A549 (cell line): ENCODE measurements at regions of chr12 and their contacts with region 1.

Region 1: GRCh38 chr12:68807576-68808387 is at the start of gene MDM2:
- DNase-seq: peak; percentile 96 to 97
- ATAC-seq: peak; percentile 87 to 91
- H3K4me3 ChIP-seq: peak within 1 kb of the TSS; percentile 88
- H3K27ac ChIP-seq: peak within 1 kb of the TSS; percentile 97
- H3K4me1 ChIP-seq: peaks cover 28% of the 10 kb centered on the region
- CTCF ChIP-seq: peak; percentile 67
- EP300 ChIP-seq: no peak
- POLR2A ChIP-seq: peak; percentile 66
- RAD21 ChIP-seq: peak; percentile 6 to 12; a peak in 1 of 5 replicates
- polyA plus RNA-seq, gene MDM2: 96.4 and 108 TPM in 2 replicates

Region 2: DNA sequence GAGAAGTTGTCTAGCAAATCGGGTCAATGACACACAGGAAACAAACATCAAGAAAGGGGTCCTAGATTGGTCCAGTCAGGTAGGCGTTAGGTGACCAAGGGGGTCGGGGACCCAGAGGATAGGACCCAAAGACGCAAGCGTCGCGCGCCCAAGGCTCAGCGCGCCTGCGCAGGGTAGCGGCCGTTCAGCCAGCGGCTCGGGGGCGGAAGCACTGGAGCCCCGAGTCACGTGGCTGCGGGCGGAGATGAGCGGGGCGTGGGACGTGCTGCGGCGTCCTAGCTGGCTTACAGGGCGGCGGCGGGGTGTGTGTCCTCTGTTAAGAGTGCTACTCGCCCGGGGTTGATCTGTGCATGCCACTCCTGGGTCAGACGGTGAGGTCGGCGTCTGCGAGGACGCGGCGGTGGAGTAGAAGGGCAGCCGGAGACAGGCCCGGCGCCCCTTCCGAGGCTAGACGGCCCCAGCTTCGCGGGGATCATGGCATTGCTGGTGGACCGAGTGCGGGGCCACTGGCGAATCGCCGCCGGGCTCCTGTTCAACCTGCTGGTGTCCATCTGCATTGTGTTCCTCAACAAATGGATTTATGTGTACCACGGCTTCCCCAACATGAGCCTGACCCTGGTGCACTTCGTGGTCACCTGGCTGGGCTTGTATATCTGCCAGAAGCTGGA is 61.7 kb before region 1 on chr12 and contains the start of gene SLC35E3:
- CTCF ChIA-PET with region 1: interaction called, 7 read pairs
- POLR2A ChIA-PET with region 1: interaction called, 45 read pairs
- DNase-seq: peak; percentile 93 to 95
- ATAC-seq: peak; percentile 97 to 99
- H3K4me3 ChIP-seq: peak within 1 kb of the TSS; percentile 71
- H3K27ac ChIP-seq: peak within 1 kb of the TSS; percentile 80 to 85
- H3K4me1 ChIP-seq: peaks cover 13% of the 10 kb centered on the region
- CTCF ChIP-seq: no peak
- EP300 ChIP-seq: no peak
- POLR2A ChIP-seq: peak; percentile 85
- RAD21 ChIP-seq: no peak
- polyA plus RNA-seq, gene SLC35E3: 16.7 and 22.1 TPM in 2 replicates

Region 3: DNA sequence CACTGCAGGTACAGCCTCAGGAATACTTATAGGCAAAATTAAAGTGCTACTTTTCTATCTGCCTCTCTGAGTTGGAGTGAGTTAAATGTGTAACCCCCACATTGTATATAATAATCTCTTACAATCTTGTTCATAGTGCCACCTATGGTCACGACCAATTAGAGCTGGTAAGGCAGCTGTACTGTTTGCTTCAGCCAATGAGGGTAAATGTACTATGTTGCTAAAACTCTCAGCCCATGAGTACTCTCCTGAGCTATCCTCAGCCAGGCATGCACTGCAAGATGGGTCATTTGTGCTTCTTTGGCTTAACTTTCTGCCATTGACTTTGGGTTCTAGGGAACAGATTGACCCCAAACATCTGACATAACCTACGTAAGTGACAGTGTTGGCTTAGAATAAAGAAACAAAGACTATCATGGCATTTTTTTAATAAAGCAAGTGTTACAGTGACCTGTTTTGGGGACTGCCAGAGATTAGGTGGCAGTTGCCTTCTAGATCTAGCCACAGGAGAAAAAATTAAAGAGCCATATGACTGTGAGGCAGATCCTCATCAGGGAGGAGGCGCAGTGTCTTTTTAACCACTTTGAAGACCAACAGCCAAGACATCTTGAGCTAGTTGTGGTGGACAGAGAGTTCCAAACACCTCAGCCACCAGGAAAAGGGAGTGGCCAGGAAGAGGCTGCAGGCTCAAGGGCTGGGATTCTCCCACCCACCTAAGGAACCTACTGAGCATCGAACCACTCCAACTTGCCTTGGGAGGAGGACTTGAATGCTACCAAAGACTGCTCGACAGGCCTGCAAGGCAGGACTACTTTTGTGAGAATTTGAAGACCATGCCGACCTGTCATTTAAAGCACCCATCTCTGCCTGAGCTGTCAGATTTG is 14.6 kb before region 1 on chr12:
- CTCF ChIA-PET with region 1: interaction called, 19 read pairs
- POLR2A ChIA-PET with region 1: interaction called, 3 read pairs
- DNase-seq: peak; percentile 70 to 81
- ATAC-seq: peak; percentile 93 to 98
- H3K4me3 ChIP-seq: no peak overlapping the region
- H3K27ac ChIP-seq: no peak overlapping the region
- H3K4me1 ChIP-seq: peaks cover 11% of the 10 kb centered on the region; the same call in 2 of the 3 replicates
- CTCF ChIP-seq: no peak
- EP300 ChIP-seq: no peak
- POLR2A ChIP-seq: no peak
- RAD21 ChIP-seq: 0 out of 5 replicates have a peak, but pooled peaks of 1 of the 2 experiments have one; percentile 12

Region 4: DNA sequence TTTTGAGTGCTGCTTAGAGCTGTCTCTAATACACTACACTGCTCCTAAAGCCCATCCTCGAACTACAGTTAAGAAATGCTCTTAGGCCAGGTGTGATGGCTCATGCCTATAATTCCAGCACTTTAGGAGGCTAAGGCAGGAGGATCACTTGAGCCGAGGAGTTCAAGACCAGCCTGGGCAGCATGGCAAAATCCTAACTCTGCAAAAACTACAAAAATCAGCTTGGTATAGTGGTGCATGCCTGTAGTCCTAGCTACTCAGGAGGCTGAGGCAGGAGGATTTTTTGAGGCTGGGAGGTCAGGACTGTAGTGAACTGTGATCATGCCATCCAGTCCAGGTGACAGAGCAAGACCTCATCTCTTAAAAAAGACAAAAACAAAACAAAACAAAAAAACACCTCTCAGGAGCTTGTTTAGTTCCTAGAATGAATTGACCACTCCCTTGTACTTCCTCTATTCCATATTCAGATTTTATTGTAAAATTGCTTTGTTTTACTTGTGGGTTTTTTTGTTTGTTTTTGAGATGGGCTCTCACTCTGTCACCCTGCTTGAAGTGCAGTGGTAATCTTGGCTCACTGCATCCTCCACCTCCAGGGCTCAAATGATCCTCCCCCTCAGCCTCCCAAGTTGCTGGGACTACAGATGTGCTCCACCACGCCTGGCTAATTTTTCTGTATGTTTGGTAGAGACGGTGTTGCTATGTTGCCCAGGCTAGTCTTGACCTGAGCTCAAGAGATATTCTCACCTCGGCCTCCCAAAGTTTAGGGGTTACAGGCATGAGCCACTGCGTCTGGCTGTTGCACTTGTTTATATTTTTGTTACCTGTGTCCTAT is 13.8 kb after region 1 on chr12:
- CTCF ChIA-PET with region 1: interaction called, 8 read pairs
- POLR2A ChIA-PET with region 1: interaction called, 21 read pairs
- DNase-seq: no peak
- ATAC-seq: peak; percentile 62 to 65; a peak in 5 of 6 replicates
- H3K4me3 ChIP-seq: no peak overlapping the region
- H3K27ac ChIP-seq: no peak overlapping the region
- H3K4me1 ChIP-seq: peaks cover under 1% of the 10 kb centered on the region; the same call in 2 of the 3 replicates
- CTCF ChIP-seq: no peak
- EP300 ChIP-seq: no peak
- POLR2A ChIP-seq: no peak
- RAD21 ChIP-seq: no peak

Region 5: GRCh38 chr12:68871921-68872320 is 64.1 kb after region 1 on chr12:
- CTCF ChIA-PET with region 1: no interaction called
- POLR2A ChIA-PET with region 1: no interaction called
- DNase-seq: peak in 1 of 2 experiments; percentile 47
- ATAC-seq: peak in 1 of 2 experiments; percentile 68; a peak in 3 of 6 replicates
- H3K4me3 ChIP-seq: no peak overlapping the region
- H3K27ac ChIP-seq: no peak overlapping the region
- H3K4me1 ChIP-seq: no peaks in the 10 kb centered on the region
- CTCF ChIP-seq: peak; percentile 32; the same call in 1 of the 3 replicates
- EP300 ChIP-seq: no peak
- POLR2A ChIP-seq: no peak
- RAD21 ChIP-seq: peak; percentile 22 to 64; a peak in 2 of 5 replicates

Region 6: DNA sequence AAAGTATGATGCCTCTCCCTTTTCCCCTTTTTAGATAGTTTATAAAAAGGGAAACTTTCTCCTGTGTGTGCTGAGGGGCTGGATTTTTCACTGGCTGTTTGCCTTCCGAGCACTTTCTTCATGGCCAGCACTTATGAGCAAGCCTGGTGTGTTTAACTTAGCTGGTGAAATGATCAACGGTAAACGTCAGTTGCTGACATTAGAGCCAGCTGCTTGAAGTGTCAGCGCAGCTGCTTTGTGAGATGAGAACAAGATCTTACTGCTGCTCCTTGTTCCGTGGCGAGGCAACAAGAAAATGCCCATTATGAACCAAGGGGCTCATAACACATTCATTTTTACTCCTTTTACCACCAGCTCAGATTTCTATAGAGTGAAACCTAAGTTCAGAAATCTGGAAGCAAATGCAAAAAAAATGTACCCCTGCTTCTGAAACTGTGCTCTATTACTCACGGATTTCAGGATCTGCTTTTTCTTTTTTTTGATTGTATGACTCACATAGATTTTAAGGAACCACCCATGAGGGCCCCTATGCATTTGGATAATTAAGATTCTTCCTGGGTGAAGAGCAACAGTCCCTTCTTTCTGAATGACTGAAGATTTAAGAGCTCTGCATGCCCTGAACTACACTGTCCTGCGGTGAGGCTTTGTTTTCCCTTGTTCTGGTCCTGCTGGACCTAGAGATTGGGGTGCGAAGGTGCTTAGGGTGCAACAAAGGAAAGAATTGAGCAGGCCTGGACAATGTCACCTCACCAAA is 199.5 kb after region 1 on chr12:
- CTCF ChIA-PET with region 1: no interaction called
- POLR2A ChIA-PET with region 1: no interaction called
- DNase-seq: peak in 1 of 2 experiments; percentile 19
- ATAC-seq: peak; percentile 60 to 76; a peak in 4 of 6 replicates
- H3K4me3 ChIP-seq: no peak overlapping the region
- H3K27ac ChIP-seq: peak overlapping the region in 1 of 2 experiments; percentile 20; a peak in 1 of 6 replicates
- H3K4me1 ChIP-seq: peaks cover 17% of the 10 kb centered on the region
- CTCF ChIP-seq: no peak
- EP300 ChIP-seq: no peak
- POLR2A ChIP-seq: no peak
- RAD21 ChIP-seq: no peak